ENCODE measurements at regions of chr16 and their contacts with region 1.

Region 1: DNA sequence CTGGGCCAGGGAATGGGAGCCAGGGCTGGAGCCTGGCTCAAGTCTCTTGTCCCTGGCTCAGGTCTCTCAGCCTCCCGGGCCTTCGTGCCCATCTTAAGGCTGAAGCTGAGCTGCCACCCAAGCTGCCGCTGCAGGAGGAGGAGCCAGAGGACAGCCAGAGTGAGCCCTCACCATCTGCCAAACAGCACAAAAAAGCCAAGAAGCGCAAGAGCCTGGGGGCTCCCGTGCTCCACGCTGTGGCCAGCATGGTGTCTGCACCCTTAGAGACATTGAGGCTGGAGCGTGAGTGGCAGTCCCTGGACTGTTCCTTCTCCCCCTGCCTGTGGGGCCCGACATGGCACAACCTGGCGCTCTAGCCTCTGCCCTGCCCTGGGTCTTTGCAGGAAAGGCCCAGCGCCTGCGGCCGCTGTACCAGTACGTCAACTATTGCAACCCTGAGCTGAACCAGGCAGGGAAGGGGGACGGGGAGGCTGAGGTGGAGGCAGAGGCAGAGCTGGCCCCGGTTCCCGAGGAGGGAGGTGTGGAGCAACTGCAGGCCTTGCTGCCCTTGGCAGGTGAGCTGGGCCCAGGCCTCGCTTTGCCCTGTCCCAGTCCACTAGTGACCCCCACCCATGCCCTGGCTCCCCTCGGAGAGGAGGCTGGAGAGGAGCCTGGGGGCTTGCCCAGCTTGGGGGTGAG is 1.3 kb downstream of the C16orf86 start:
- DNase-seq: peak; percentile 88 to 95
- H3K4me3 ChIP-seq: peak overlapping the region; percentile 71 to 82
- H3K27ac ChIP-seq: peak overlapping the region; percentile 90 to 95
- H3K4me1 ChIP-seq: peaks cover 0 to 31% (median 23%) of the 10 kb centered on the region in 4 donors
- H3K27me3 ChIP-seq: no peaks in the 10 kb centered on the region
- CTCF ChIP-seq: peak; percentile 93 to 99

Region 2: GRCh38 chr16:67521095-67521804 is 146.7 kb before region 1 on chr16:
- intact Hi-C with region 1: loop called (anchors 2 kb)
- DNase-seq: peak; percentile 97
- H3K4me3 ChIP-seq: peak overlapping the region; percentile 44 to 48
- H3K27ac ChIP-seq: peak overlapping the region; percentile 77 to 88
- H3K4me1 ChIP-seq: peaks cover 0 to 6% (median 4%) of the 10 kb centered on the region in 4 donors
- H3K27me3 ChIP-seq: no peaks in the 10 kb centered on the region
- CTCF ChIP-seq: peak; percentile 75 to 98

Region 3: GRCh38 chr16:67546761-67547422 is 121.1 kb before region 1 on chr16:
- intact Hi-C with region 1: loop called (anchors 5 kb)
- DNase-seq: peak in 1 of 2 donors; percentile 82
- H3K4me3 ChIP-seq: no peak overlapping the region
- H3K27ac ChIP-seq: no peak overlapping the region
- H3K4me1 ChIP-seq: peaks cover 0 to 31% (median 3%) of the 10 kb centered on the region in 4 donors
- H3K27me3 ChIP-seq: no peaks in the 10 kb centered on the region
- CTCF ChIP-seq: peak; percentile 82 to 94

Region 4: DNA sequence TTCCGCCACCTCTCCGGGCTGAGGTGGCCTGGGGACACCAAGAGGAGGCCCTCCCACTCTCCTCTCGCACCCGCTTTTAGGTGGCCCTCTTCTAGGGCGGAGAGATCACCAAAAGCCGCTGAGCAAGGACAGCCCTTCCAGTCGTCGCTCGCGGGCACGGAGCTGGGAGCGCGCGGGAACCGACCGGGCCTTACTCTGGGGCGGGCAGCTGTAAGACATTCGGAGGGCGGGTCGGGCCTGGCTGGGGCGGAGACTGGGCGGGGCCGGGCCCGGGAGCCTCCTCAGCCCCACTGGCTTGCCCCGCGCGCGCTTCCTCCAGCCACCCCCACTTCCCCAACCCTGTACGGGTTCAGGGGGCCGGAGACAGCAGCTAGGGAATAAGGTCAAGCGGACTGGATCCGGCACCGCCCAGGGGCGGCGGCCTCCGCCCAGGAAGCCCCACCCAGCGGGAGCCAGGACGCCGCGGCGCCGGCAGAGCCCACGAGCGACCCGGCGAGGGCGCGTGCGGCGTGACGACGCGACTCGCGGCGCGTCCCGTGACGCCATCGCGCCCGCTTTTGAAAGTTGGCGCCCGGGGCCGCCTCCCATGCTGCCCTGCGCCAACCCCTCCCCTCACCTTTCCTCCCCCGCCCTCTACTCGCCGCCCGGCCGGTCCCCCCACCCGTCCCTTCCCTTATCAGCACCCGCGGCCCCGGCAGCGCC is 106.0 kb before region 1 on chr16:
- intact Hi-C with region 1: loop called (anchors 1 kb)
- DNase-seq: peak; percentile 97 to 98
- H3K4me3 ChIP-seq: peak overlapping the region; percentile 91 to 95
- H3K27ac ChIP-seq: peak overlapping the region; percentile 98 to 99
- H3K4me1 ChIP-seq: peaks cover 0 to 30% (median 20%) of the 10 kb centered on the region in 4 donors
- H3K27me3 ChIP-seq: no peaks in the 10 kb centered on the region
- CTCF ChIP-seq: no peak

Region 5: GRCh38 chr16:67806428-67807147 is 138.6 kb after region 1 on chr16 and contains the starts of genes RANBP10 and TSNAXIP1:
- intact Hi-C with region 1: loop called (anchors 5 kb)
- DNase-seq: peak; percentile 99
- H3K4me3 ChIP-seq: peak within 1 kb of the TSS; percentile 91
- H3K27ac ChIP-seq: peak within 1 kb of the TSS; percentile 86 to 89
- H3K4me1 ChIP-seq: peaks cover 0 to 25% (median 17%) of the 10 kb centered on the region in 4 donors
- H3K27me3 ChIP-seq: no peaks in the 10 kb centered on the region
- CTCF ChIP-seq: no peak